ENCODE measurements at regions of chr1 and their contacts with region 1.

Region 1: GRCh38 chr1:83931658-83932253 is 67.2 kb downstream of the TTLL7 start:
- DNase-seq: no peak
- H3K4me3 ChIP-seq: no peak overlapping the region
- H3K27ac ChIP-seq: no peak overlapping the region
- H3K4me1 ChIP-seq: no peaks in the 10 kb centered on the region
- H3K27me3 ChIP-seq: no peaks in the 10 kb centered on the region
- CTCF ChIP-seq: peak; percentile 27 to 61 (median 46)
- POLR2A ChIP-seq: no peak

Region 2: DNA sequence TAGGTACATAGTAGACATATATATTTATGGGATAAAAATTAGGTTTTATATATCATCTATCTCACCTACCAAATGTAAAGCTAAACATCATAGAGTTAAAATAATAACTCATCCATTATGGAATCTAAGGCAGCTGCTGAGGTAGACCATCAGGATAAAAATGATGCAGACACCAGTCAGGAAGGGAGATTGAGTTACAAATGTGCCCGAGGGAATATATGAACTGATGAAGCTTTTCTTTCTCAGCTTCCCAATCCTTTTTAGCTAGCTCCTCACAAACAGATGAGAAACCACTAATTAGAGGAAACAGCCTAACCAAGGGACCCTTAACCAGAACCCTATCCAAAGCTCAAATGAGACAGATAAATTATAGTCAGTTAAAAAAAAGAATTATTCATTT is 46.3 kb after region 1 on chr1:
- intact Hi-C with region 1: no loop called
- DNase-seq: no peak
- H3K4me3 ChIP-seq: no peak overlapping the region
- H3K27ac ChIP-seq: no peak overlapping the region
- H3K4me1 ChIP-seq: no peaks in the 10 kb centered on the region
- H3K27me3 ChIP-seq: no peaks in the 10 kb centered on the region
- CTCF ChIP-seq: no peak
- POLR2A ChIP-seq: no peak

Region 3: DNA sequence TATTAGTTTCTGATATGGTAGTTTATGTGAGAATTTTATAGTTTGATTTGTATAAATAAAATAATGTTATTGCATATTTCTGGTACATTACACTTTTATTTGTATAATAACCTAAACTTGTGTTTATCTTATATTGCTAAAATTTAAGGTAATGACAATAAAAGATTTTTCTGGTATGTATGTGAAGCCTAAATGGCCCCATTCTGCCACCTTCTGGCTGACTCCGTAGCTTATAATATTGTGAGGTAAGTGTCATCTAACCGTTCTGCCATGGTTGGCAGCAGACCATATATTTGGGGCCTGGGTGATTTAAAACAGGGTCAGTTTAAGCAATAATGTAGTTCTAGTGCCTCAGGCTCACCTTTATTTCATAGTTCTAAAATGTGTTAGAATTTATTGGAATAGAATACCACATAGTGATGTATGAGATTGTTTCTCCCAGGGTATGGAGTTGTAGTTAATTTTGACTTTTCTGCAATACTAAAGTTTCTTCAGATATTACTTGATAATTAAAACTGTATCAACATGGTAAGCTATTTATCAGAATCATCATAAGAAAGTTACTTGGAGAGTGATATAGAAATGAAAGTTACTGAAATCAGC is 191.1 kb after region 1 on chr1:
- intact Hi-C with region 1: loop called (anchors 5 kb)
- DNase-seq: no peak
- H3K4me3 ChIP-seq: no peak overlapping the region
- H3K27ac ChIP-seq: no peak overlapping the region
- H3K4me1 ChIP-seq: no peaks in the 10 kb centered on the region
- H3K27me3 ChIP-seq: no peaks in the 10 kb centered on the region
- CTCF ChIP-seq: peak in 2 of 3 experiments; percentile 32 to 37
- POLR2A ChIP-seq: no peak

Measured in vagina (tissue), 2 donors.